ENCODE measurements at regions of chr13 and their contacts with region 1.

Region 1: DNA sequence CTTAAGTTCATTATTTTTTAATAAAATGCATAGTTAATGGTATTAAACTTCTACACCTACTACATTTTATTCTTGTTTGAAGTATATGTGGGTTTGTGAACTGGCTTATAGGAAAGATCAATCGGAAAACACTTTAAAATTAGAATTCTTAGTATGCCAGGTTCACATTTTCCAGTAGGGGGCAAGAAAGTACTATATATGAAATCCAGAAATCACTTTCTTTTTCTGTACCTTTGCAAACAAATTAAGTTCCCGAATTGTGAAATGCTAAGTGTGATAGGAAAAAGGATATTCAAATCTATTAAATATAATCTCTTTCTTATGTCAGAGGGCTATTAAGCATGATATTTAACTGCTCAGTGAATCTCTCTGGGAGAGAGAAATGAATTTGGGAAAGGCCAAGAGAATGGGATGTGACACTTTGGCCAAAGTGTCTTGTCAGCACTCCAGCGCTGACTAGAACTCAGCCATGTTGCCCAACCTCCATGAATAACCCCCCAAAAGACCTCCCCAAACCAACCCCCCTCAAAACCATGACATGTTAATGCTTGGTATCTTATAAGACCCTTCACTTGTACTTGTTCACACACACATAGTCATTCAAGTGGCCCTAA is 122.6 kb upstream of the SLC10A2 start:
- DNase-seq: peak; percentile 48
- H3K4me3 Mint-ChIP-seq: no peak overlapping the region
- H3K27ac Mint-ChIP-seq: no peak overlapping the region
- H3K4me1 Mint-ChIP-seq: peaks cover 6% of the 10 kb centered on the region
- H3K27me3 Mint-ChIP-seq: no peaks in the 10 kb centered on the region
- CTCF ChIP-seq: peak; percentile 54

Region 2: GRCh38 chr13:103315711-103316110 is 126.9 kb after region 1 on chr13:
- CTCF ChIA-PET with region 1: no interaction called
- POLR2A ChIA-PET with region 1: no interaction called
- intact Hi-C with region 1: no loop called
- DNase-seq: no peak
- H3K4me3 Mint-ChIP-seq: no peak overlapping the region
- H3K27ac Mint-ChIP-seq: no peak overlapping the region
- H3K4me1 Mint-ChIP-seq: no peaks in the 10 kb centered on the region
- H3K27me3 Mint-ChIP-seq: no peaks in the 10 kb centered on the region
- CTCF ChIP-seq: no peak

Region 3: GRCh38 chr13:103638706-103639105 is 449.9 kb after region 1 on chr13:
- CTCF ChIA-PET with region 1: no interaction called
- POLR2A ChIA-PET with region 1: no interaction called
- intact Hi-C with region 1: no loop called
- DNase-seq: no peak
- H3K4me3 Mint-ChIP-seq: no peak overlapping the region
- H3K27ac Mint-ChIP-seq: no peak overlapping the region
- H3K4me1 Mint-ChIP-seq: peaks cover 5% of the 10 kb centered on the region
- H3K27me3 Mint-ChIP-seq: no peaks in the 10 kb centered on the region
- CTCF ChIP-seq: no peak

Region 4: DNA sequence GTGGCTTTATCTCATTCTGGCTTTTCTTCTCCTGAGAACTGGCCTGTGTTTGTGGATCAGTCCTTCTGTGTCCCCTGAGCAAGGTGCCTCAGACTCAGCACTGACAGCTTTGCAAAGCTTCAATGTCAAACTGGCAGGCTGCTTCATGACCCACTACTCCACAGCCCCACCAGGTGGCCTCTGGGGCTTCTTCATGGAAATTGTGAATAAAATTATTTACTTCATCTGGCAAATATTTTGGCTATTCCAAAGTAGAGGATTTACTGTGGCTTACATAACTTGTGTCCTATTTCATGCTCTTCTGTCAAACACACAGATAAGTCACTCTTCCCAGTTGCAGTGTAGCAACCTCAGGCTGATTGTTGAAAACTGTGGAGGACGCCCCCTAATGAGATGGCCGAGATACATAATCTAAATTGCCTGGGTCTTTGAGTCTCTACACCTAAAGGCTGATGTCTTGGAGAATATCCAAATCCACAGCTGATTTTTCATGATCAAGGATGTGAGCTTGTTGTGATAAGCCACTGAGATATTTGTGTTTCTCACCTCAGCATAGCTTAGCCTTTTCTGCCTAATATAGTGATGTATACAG is 599.3 kb after region 1 on chr13:
- CTCF ChIA-PET with region 1: interaction called, 14 read pairs
- POLR2A ChIA-PET with region 1: no interaction called
- intact Hi-C with region 1: no loop called
- DNase-seq: peak; percentile 39
- H3K4me3 Mint-ChIP-seq: no peak overlapping the region
- H3K27ac Mint-ChIP-seq: no peak overlapping the region
- H3K4me1 Mint-ChIP-seq: no peaks in the 10 kb centered on the region
- H3K27me3 Mint-ChIP-seq: no peaks in the 10 kb centered on the region
- CTCF ChIP-seq: peak; percentile 19

Region 5: GRCh38 chr13:103883164-103883563 is 694.3 kb after region 1 on chr13:
- CTCF ChIA-PET with region 1: interaction called, 9 read pairs
- POLR2A ChIA-PET with region 1: interaction called, 3 read pairs
- intact Hi-C with region 1: loop called (anchors 5 kb)
- DNase-seq: peak; percentile 95
- H3K4me3 Mint-ChIP-seq: peak overlapping the region; percentile 57
- H3K27ac Mint-ChIP-seq: no peak overlapping the region
- H3K4me1 Mint-ChIP-seq: peaks cover 5% of the 10 kb centered on the region
- H3K27me3 Mint-ChIP-seq: no peaks in the 10 kb centered on the region
- CTCF ChIP-seq: peak; percentile 60

Measured in MCF 10A (cell line).